CD8-positive, alpha-beta T cell (primary cell): ENCODE measurements at regions of chr20 and their contacts with region 1.

Region 1: GRCh38 chr20:3820048-3820900 is at the start of gene AP5S1:
- DNase-seq: peak; percentile 81 to 96 (median 89)
- ATAC-seq: peak; percentile 85
- H3K4me3 ChIP-seq: peak within 1 kb of the TSS; percentile 60 to 64
- H3K4me3 Mint-ChIP-seq: peak within 1 kb of the TSS; percentile 92
- H3K27ac ChIP-seq: peak within 1 kb of the TSS; percentile 92 to 97
- H3K27ac Mint-ChIP-seq: peak within 1 kb of the TSS; percentile 98
- H3K4me1 ChIP-seq: peaks cover 51% of the 10 kb centered on the region
- H3K4me1 Mint-ChIP-seq: peaks cover 51% of the 10 kb centered on the region
- H3K27me3 ChIP-seq: no peaks in the 10 kb centered on the region
- H3K27me3 Mint-ChIP-seq: no peaks in the 10 kb centered on the region
- CTCF ChIP-seq: peak; percentile 94
- total RNA-seq, gene AP5S1: 5.2 to 6.3 TPM

Region 2: DNA sequence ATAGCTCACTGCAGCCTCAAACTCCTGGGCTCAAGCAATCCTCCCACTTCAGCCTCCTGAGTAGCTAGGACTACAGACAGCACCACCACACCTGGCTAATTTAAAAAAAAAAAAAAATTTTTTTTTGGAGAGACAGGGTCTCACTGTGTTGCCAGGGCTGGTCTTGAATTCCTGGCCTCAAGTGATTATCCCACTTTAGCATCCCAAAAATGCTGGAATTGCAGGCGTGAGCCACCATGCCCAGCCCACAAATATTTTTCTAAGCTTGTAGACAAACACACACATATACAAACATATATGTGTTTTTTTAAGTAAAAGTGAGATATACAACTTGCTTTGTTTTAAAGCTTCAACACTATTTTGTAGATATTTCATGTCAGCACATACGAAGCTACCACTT is 77.0 kb before region 1 on chr20:
- CTCF ChIA-PET with region 1: no interaction called
- POLR2A ChIA-PET with region 1: no interaction called
- intact Hi-C with region 1: no loop called
- DNase-seq: no peak
- ATAC-seq: no peak
- H3K4me3 ChIP-seq: no peak overlapping the region
- H3K4me3 Mint-ChIP-seq: no peak overlapping the region
- H3K27ac ChIP-seq: no peak overlapping the region
- H3K27ac Mint-ChIP-seq: no peak overlapping the region
- H3K4me1 ChIP-seq: peaks cover 9% of the 10 kb centered on the region
- H3K4me1 Mint-ChIP-seq: peaks cover 12% of the 10 kb centered on the region
- H3K27me3 ChIP-seq: no peaks in the 10 kb centered on the region
- H3K27me3 Mint-ChIP-seq: peaks cover 5% of the 10 kb centered on the region
- CTCF ChIP-seq: no peak

Region 3: GRCh38 chr20:3753098-3753980 is 66.9 kb before region 1 on chr20:
- CTCF ChIA-PET with region 1: interaction called, 7 read pairs
- POLR2A ChIA-PET with region 1: no interaction called
- intact Hi-C with region 1: loop called in 1 of 2 experiments (anchors 1 kb)
- DNase-seq: peak; percentile 37 to 82 (median 67)
- ATAC-seq: peak; percentile 87
- H3K4me3 ChIP-seq: no peak overlapping the region
- H3K4me3 Mint-ChIP-seq: no peak overlapping the region
- H3K27ac ChIP-seq: no peak overlapping the region
- H3K27ac Mint-ChIP-seq: no peak overlapping the region
- H3K4me1 ChIP-seq: no peaks in the 10 kb centered on the region
- H3K4me1 Mint-ChIP-seq: peaks cover 4% of the 10 kb centered on the region
- H3K27me3 ChIP-seq: no peaks in the 10 kb centered on the region
- H3K27me3 Mint-ChIP-seq: no peaks in the 10 kb centered on the region
- CTCF ChIP-seq: peak; percentile 57

Region 4: GRCh38 chr20:3781153-3781910 is 38.9 kb before region 1 on chr20 and contains the start of gene SPEF1:
- CTCF ChIA-PET with region 1: interaction called, 195 read pairs
- POLR2A ChIA-PET with region 1: interaction called, 49 read pairs
- intact Hi-C with region 1: loop called (anchors 1 kb)
- DNase-seq: peak in 5 of 9 experiments; percentile 37 to 82 (median 39)
- ATAC-seq: peak; percentile 43
- H3K4me3 ChIP-seq: peak within 1 kb of the TSS in 1 of 2 experiments; percentile 26
- H3K4me3 Mint-ChIP-seq: peak within 1 kb of the TSS; percentile 46
- H3K27ac ChIP-seq: peak within 1 kb of the TSS in 1 of 2 experiments; percentile 16
- H3K27ac Mint-ChIP-seq: peak within 1 kb of the TSS; percentile 27
- H3K4me1 ChIP-seq: peaks cover 43% of the 10 kb centered on the region
- H3K4me1 Mint-ChIP-seq: peaks cover 37% of the 10 kb centered on the region
- H3K27me3 ChIP-seq: peaks cover 0 to 3% of the 10 kb centered on the region in 2 experiments
- H3K27me3 Mint-ChIP-seq: peaks cover 5% of the 10 kb centered on the region
- CTCF ChIP-seq: no peak
- total RNA-seq, gene SPEF1: 0.16 TPM in 1 of 2 experiments, not detected in the other

Region 5: GRCh38 chr20:3846740-3847428 is 26.6 kb after region 1 on chr20 and contains the start of gene MAVS:
- CTCF ChIA-PET with region 1: interaction called, 9 read pairs
- POLR2A ChIA-PET with region 1: interaction called, 3 read pairs
- intact Hi-C with region 1: loop called (anchors 1 kb)
- DNase-seq: peak; percentile 67 to 92 (median 85)
- ATAC-seq: peak; percentile 97
- H3K4me3 ChIP-seq: peak within 1 kb of the TSS; percentile 76 to 87
- H3K4me3 Mint-ChIP-seq: peak within 1 kb of the TSS; percentile 87
- H3K27ac ChIP-seq: peak within 1 kb of the TSS; percentile 60 to 79
- H3K27ac Mint-ChIP-seq: peak within 1 kb of the TSS; percentile 82
- H3K4me1 ChIP-seq: peaks cover 10% of the 10 kb centered on the region
- H3K4me1 Mint-ChIP-seq: peaks cover 33% of the 10 kb centered on the region
- H3K27me3 ChIP-seq: no peaks in the 10 kb centered on the region
- H3K27me3 Mint-ChIP-seq: no peaks in the 10 kb centered on the region
- CTCF ChIP-seq: no peak
- total RNA-seq, gene MAVS: 10.0 to 10.5 TPM

Region 6: GRCh38 chr20:4018015-4018748 is 197.9 kb after region 1 on chr20:
- CTCF ChIA-PET with region 1: no interaction called
- POLR2A ChIA-PET with region 1: no interaction called
- intact Hi-C with region 1: no loop called
- DNase-seq: no peak
- ATAC-seq: no peak
- H3K4me3 ChIP-seq: no peak overlapping the region
- H3K4me3 Mint-ChIP-seq: no peak overlapping the region
- H3K27ac ChIP-seq: no peak overlapping the region
- H3K27ac Mint-ChIP-seq: no peak overlapping the region
- H3K4me1 ChIP-seq: peaks cover 17% of the 10 kb centered on the region
- H3K4me1 Mint-ChIP-seq: peaks cover 24% of the 10 kb centered on the region
- H3K27me3 ChIP-seq: no peaks in the 10 kb centered on the region
- H3K27me3 Mint-ChIP-seq: peaks cover 5% of the 10 kb centered on the region
- CTCF ChIP-seq: no peak

Region 7: GRCh38 chr20:4383966-4384365 is 563.7 kb after region 1 on chr20:
- CTCF ChIA-PET with region 1: no interaction called
- POLR2A ChIA-PET with region 1: no interaction called
- intact Hi-C with region 1: no loop called
- DNase-seq: no peak
- ATAC-seq: no peak
- H3K4me3 ChIP-seq: no peak overlapping the region
- H3K4me3 Mint-ChIP-seq: no peak overlapping the region
- H3K27ac ChIP-seq: no peak overlapping the region
- H3K27ac Mint-ChIP-seq: no peak overlapping the region
- H3K4me1 ChIP-seq: no peaks in the 10 kb centered on the region
- H3K4me1 Mint-ChIP-seq: no peaks in the 10 kb centered on the region
- H3K27me3 ChIP-seq: peaks cover 0 to 4% of the 10 kb centered on the region in 2 experiments
- H3K27me3 Mint-ChIP-seq: peaks cover 23% of the 10 kb centered on the region
- CTCF ChIP-seq: no peak